ENCODE measurements at regions of chr17 and their contacts with region 1.

Region 1: GRCh38 chr17:66200685-66201092 is 8.8 kb upstream of the CEP112 start:
- DNase-seq: peak; percentile 69
- ATAC-seq: peak; percentile 74
- H3K4me3 Mint-ChIP-seq: no peak overlapping the region
- H3K27ac Mint-ChIP-seq: no peak overlapping the region
- H3K4me1 Mint-ChIP-seq: peaks cover 17% of the 10 kb centered on the region
- H3K27me3 Mint-ChIP-seq: no peaks in the 10 kb centered on the region

Region 2: GRCh38 chr17:66248285-66248684 is 47.6 kb after region 1 on chr17:
- CTCF ChIA-PET with region 1: no interaction called
- POLR2A ChIA-PET with region 1: no interaction called
- intact Hi-C with region 1: loop called in 1 of 2 experiments (anchors 5 kb)
- DNase-seq: no peak
- ATAC-seq: no peak
- H3K4me3 Mint-ChIP-seq: no peak overlapping the region
- H3K27ac Mint-ChIP-seq: no peak overlapping the region
- H3K4me1 Mint-ChIP-seq: peaks cover 29% of the 10 kb centered on the region
- H3K27me3 Mint-ChIP-seq: no peaks in the 10 kb centered on the region

Region 3: GRCh38 chr17:66331038-66331816 is 130.5 kb after region 1 on chr17:
- CTCF ChIA-PET with region 1: no interaction called
- POLR2A ChIA-PET with region 1: no interaction called
- intact Hi-C with region 1: no loop called
- DNase-seq: peak; percentile 46
- ATAC-seq: peak; percentile 74
- H3K4me3 Mint-ChIP-seq: peak overlapping the region; percentile 68
- H3K27ac Mint-ChIP-seq: peak overlapping the region; percentile 93
- H3K4me1 Mint-ChIP-seq: peaks cover 83% of the 10 kb centered on the region
- H3K27me3 Mint-ChIP-seq: no peaks in the 10 kb centered on the region

Region 4: GRCh38 chr17:66426397-66427033 is 225.8 kb after region 1 on chr17:
- CTCF ChIA-PET with region 1: interaction called, 3 read pairs
- POLR2A ChIA-PET with region 1: no interaction called
- intact Hi-C with region 1: loop called (anchors 2 to 5 kb)
- DNase-seq: peak; percentile 60
- ATAC-seq: peak; percentile 94
- H3K4me3 Mint-ChIP-seq: peak overlapping the region; percentile 4
- H3K27ac Mint-ChIP-seq: peak overlapping the region; percentile 88
- H3K4me1 Mint-ChIP-seq: peaks cover 77% of the 10 kb centered on the region
- H3K27me3 Mint-ChIP-seq: no peaks in the 10 kb centered on the region

Region 5: DNA sequence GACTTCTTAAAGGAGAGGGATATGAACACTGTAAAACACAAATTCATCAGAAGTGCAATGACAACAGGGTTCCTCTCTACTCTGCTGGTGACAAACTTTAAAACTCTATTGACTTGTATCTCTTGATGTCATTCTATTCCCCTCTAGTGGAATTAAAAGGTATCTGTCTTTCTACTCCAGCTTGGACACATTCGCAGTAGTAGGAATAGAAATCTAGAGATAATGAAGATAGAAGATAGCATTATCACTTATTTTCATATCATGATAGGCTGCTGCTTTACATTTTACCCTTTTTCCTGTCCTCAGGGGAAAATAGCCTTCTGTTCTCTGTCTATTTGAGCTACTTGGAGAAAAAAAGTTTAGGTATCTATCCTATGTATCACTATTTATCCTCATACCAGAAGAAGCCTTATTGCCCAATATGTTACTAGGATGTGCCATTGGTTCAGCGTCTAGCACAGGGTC is 424.7 kb after region 1 on chr17:
- CTCF ChIA-PET with region 1: no interaction called
- POLR2A ChIA-PET with region 1: no interaction called
- intact Hi-C with region 1: loop called in 1 of 2 experiments (anchors 5 kb)
- DNase-seq: no peak
- ATAC-seq: peak; percentile 60
- H3K4me3 Mint-ChIP-seq: no peak overlapping the region
- H3K27ac Mint-ChIP-seq: no peak overlapping the region
- H3K4me1 Mint-ChIP-seq: peaks cover 26% of the 10 kb centered on the region
- H3K27me3 Mint-ChIP-seq: no peaks in the 10 kb centered on the region

Region 6: DNA sequence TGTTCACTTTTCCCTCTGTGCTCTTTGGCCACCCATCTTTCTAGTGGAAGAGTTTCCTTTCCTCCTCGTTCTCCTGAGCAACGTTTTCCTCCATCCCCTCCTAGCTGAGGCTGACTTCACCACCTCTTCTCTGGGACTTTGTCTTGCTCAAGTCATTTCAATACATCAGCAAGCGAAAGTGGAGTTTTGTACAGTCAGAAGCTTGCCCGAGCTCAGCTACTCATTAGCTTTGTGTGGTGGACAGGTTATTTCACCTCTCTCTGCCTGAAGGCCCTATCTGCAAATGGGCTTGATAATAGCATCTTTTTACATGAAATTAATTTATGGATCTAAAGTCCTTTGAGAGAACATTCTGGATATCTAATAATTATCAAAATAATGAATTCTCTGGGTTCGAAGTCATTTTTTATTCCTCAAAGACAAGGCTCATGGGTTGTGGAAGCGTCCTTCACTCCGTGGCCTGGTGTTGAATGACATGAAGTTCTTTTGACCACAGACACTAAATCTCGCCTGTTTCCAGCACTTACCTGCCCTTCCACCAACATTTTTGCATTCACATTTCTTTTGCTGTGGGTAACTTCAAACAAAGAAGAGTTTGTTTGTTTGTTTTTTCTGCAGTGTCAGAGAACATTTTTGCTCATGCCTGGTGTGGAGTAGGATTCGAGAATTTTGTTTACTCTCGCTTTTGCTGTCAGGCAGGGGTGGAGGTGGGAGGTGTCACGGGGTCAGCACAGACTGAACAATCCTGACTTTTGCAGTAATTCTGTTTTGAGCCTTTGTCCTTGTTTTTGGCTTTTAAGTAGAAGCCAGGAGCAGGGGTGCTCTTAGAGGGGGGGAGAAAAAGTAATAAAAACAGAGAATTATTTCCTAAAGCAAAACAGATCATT is 479.2 kb after region 1 on chr17:
- CTCF ChIA-PET with region 1: no interaction called
- POLR2A ChIA-PET with region 1: no interaction called
- intact Hi-C with region 1: no loop called
- DNase-seq: no peak
- ATAC-seq: no peak
- H3K4me3 Mint-ChIP-seq: no peak overlapping the region
- H3K27ac Mint-ChIP-seq: peak overlapping the region; percentile 19
- H3K4me1 Mint-ChIP-seq: peaks cover 24% of the 10 kb centered on the region
- H3K27me3 Mint-ChIP-seq: no peaks in the 10 kb centered on the region

Region 7: GRCh38 chr17:66906321-66907278 is 705.9 kb after region 1 on chr17:
- CTCF ChIA-PET with region 1: interaction called, 4 read pairs
- POLR2A ChIA-PET with region 1: no interaction called
- intact Hi-C with region 1: loop called (anchors 1 kb)
- DNase-seq: peak; percentile 86
- ATAC-seq: peak; percentile 64
- H3K4me3 Mint-ChIP-seq: no peak overlapping the region
- H3K27ac Mint-ChIP-seq: no peak overlapping the region
- H3K4me1 Mint-ChIP-seq: peaks cover 5% of the 10 kb centered on the region
- H3K27me3 Mint-ChIP-seq: peaks cover 4% of the 10 kb centered on the region

Measured in activated CD4-positive, alpha-beta T cell treated with anti-CD3 and anti-CD28 coated beads for 36 hours (primary cell).